Naive thymus-derived CD8-positive, alpha-beta T cell (primary cell): ENCODE measurements at regions of chr18 and their contacts with region 1.

Region 1: GRCh38 chr18:63320046-63320689 is 599 bp upstream of the BCL2 start:
- DNase-seq: peak; percentile 79 to 95 (median 86)
- ATAC-seq: peak; percentile 76 to 83
- H3K4me3 Mint-ChIP-seq: peak overlapping the region; percentile 81 to 99 (median 88)
- H3K27ac Mint-ChIP-seq: peak overlapping the region; percentile 68 to 97 (median 92)
- H3K4me1 Mint-ChIP-seq: peaks cover 20 to 64% (median 42%) of the 10 kb centered on the region in 4 donors
- H3K27me3 Mint-ChIP-seq: no peaks in the 10 kb centered on the region

Region 2: DNA sequence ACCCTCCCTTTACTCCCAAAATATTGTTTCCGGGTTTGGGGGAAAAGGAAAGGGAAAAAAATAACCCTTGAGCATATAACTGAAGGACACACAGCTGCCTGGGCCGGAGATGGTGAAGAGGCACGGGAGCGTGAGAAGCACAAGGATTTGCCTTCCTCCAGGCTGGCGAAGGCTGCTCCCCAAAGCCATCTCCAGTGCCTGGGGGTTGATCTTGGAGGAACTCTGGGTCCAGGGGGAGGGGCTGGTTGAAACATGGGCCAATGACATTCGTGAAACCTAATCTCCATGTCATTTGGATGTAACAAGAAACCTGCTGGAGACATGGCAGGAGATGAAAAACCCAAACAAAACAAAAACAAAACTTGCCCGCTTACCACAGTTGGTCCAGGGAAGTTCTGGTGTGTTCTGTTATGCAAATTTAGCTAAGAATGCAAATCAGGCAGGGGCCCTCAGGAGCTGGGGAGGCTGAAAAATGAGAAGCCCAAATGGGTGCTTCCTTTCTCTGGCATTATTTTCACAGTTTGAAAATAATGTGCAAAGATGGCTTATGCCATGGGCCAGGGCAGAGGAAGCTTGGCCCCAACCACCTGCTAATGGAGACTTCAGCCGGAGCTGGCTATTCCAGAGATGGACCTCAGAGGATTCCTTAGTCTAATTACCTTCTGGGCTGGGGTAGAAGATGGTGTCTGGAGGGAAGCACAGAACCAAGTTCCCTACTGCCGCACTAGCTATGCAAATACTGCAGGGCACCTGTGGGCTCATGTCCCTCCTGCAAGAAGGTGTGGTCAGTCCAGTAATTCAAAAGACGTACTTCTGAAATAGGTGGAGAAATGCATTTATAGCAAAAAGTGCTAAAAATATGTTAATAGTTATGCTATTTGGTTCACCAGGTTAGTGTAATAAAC is 181.5 kb before region 1 on chr18:
- POLR2A ChIA-PET with region 1: interaction called, 21 read pairs
- DNase-seq: no peak
- ATAC-seq: peak; percentile 18 to 38
- H3K4me3 Mint-ChIP-seq: peak overlapping the region; percentile 75 to 94 (median 86)
- H3K27ac Mint-ChIP-seq: peak overlapping the region; percentile 68 to 97 (median 92)
- H3K4me1 Mint-ChIP-seq: peaks cover 47 to 83% (median 69%) of the 10 kb centered on the region in 4 donors
- H3K27me3 Mint-ChIP-seq: no peaks in the 10 kb centered on the region

Region 3: DNA sequence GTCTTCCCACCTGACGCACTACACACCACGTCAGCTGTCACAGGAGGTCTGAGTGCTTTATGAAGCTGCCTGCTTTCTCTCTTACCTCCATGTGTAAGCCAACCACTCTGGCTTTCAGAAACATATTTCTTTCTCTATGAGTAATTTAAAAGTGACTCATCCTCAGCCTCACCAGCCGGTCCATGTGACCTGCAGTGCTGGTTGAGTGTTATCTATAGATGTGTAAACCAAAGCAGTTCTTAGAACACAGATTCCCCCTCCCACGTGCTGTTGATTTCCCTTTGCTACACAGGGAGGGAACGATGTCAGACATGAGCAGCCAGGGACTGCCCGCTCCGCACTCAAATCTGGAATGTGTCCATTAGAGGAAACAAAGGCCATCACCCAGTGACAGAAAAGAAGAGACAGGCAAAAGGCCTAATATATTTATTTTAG is 158.4 kb before region 1 on chr18:
- POLR2A ChIA-PET with region 1: interaction called, 58 read pairs
- DNase-seq: peak; percentile 42 to 91 (median 77)
- ATAC-seq: peak; percentile 82
- H3K4me3 Mint-ChIP-seq: peak overlapping the region; percentile 64 to 94 (median 84)
- H3K27ac Mint-ChIP-seq: peak overlapping the region; percentile 95 to 100 (median 98)
- H3K4me1 Mint-ChIP-seq: peaks cover 58 to 96% (median 93%) of the 10 kb centered on the region in 4 donors
- H3K27me3 Mint-ChIP-seq: no peaks in the 10 kb centered on the region

Region 4: GRCh38 chr18:63266888-63267790 is 53.0 kb before region 1 on chr18:
- POLR2A ChIA-PET with region 1: interaction called, 11 read pairs
- DNase-seq: no peak
- ATAC-seq: peak; percentile 39 to 59
- H3K4me3 Mint-ChIP-seq: peak overlapping the region; percentile 49 to 79 (median 74)
- H3K27ac Mint-ChIP-seq: peak overlapping the region; percentile 35 to 90 (median 68)
- H3K4me1 Mint-ChIP-seq: peaks cover 35 to 96% (median 84%) of the 10 kb centered on the region in 4 donors
- H3K27me3 Mint-ChIP-seq: no peaks in the 10 kb centered on the region